Mammary epithelial cell (primary cell): ENCODE measurements at regions of chr3 and their contacts with region 1.

Region 1: DNA sequence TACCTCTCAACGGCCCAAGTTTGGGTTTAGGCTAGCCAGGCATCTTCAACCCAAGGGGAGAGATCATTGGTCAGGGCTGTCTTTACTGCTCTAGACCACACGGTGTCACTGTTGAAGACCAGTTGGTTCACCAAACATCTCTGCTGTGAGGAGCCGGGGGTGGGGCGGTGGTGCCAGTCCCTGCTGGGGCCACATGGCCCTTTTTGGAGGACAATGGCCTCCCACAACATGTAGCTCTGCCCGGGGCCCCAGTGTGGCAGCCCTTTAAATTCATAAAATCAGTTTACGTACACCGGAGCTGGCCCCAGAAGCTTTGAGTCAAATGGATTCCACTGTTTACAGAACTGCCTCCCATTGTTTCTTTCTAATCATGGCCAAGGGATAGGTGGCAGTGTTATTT is 19.1 kb upstream of the TM4SF18 start:
- DNase-seq: peak; percentile 55
- H3K4me3 ChIP-seq: no peak overlapping the region
- H3K27ac ChIP-seq: no peak overlapping the region
- H3K4me1 ChIP-seq: no peaks in the 10 kb centered on the region
- H3K27me3 ChIP-seq: no peaks in the 10 kb centered on the region
- CTCF ChIP-seq: peak; percentile 88 to 89

Region 2: DNA sequence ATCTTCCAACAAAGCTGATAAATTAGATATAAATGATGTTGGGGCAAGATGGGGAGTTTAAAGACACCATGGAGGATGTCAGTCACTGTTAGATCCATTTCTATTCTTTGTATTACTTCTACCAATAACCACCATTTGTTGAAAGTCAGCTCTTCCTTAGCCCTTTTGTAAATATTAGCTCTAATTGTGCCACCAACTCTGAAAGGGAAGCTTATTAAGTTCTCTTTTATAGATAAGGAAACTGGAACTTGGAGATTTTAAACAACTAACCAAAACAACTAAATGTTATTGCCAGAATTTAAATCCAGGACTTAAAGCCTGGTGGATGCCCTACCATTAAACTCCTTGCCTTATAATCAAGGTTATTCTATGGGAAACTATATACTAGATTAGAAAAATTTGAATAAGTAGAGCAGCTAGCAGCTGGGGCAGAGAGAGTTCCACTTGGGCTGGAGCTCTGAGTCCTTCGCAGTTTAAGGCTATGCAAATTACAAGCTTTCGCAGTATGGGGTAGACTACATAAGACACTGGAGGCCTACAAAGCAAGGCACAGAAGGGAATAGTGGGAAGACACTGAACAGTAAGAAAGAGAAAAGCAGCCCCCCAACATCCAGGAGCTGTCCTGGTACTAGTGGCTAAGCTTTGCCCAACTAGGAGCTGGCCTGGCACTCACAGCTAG is 71.7 kb before region 1 on chr3:
- CTCF ChIA-PET with region 1: no interaction called
- dilution Hi-C with region 1: loop called (anchors 10 kb)
- in situ Hi-C with region 1: no loop called
- intact Hi-C with region 1: no loop called
- DNase-seq: no peak
- H3K4me3 ChIP-seq: no peak overlapping the region
- H3K27ac ChIP-seq: no peak overlapping the region
- H3K4me1 ChIP-seq: peaks cover 9% of the 10 kb centered on the region
- H3K27me3 ChIP-seq: no peaks in the 10 kb centered on the region
- CTCF ChIP-seq: no peak

Region 3: GRCh38 chr3:149393345-149394160 is 41.0 kb after region 1 on chr3:
- CTCF ChIA-PET with region 1: interaction called, 4 read pairs
- dilution Hi-C with region 1: no loop called
- in situ Hi-C with region 1: no loop called
- intact Hi-C with region 1: loop called (anchors 1 kb)
- DNase-seq: peak; percentile 58
- H3K4me3 ChIP-seq: no peak overlapping the region
- H3K27ac ChIP-seq: no peak overlapping the region
- H3K4me1 ChIP-seq: peaks cover 10% of the 10 kb centered on the region
- H3K27me3 ChIP-seq: no peaks in the 10 kb centered on the region
- CTCF ChIP-seq: peak; percentile 93 to 98

Region 4: GRCh38 chr3:149460117-149460516 is 107.6 kb after region 1 on chr3:
- CTCF ChIA-PET with region 1: no interaction called
- dilution Hi-C with region 1: loop called (anchors 5 kb)
- in situ Hi-C with region 1: no loop called
- intact Hi-C with region 1: no loop called
- DNase-seq: no peak
- H3K4me3 ChIP-seq: no peak overlapping the region
- H3K27ac ChIP-seq: no peak overlapping the region
- H3K4me1 ChIP-seq: no peaks in the 10 kb centered on the region
- H3K27me3 ChIP-seq: no peaks in the 10 kb centered on the region
- CTCF ChIP-seq: no peak

Region 5: GRCh38 chr3:149480325-149481017 is 127.9 kb after region 1 on chr3:
- CTCF ChIA-PET with region 1: no interaction called
- dilution Hi-C with region 1: no loop called
- in situ Hi-C with region 1: loop called (anchors 5 kb)
- intact Hi-C with region 1: loop called (anchors 1 kb)
- DNase-seq: peak; percentile 73
- H3K4me3 ChIP-seq: no peak overlapping the region
- H3K27ac ChIP-seq: no peak overlapping the region
- H3K4me1 ChIP-seq: peaks cover 3% of the 10 kb centered on the region
- H3K27me3 ChIP-seq: no peaks in the 10 kb centered on the region
- CTCF ChIP-seq: peak; percentile 94 to 99

Region 6: DNA sequence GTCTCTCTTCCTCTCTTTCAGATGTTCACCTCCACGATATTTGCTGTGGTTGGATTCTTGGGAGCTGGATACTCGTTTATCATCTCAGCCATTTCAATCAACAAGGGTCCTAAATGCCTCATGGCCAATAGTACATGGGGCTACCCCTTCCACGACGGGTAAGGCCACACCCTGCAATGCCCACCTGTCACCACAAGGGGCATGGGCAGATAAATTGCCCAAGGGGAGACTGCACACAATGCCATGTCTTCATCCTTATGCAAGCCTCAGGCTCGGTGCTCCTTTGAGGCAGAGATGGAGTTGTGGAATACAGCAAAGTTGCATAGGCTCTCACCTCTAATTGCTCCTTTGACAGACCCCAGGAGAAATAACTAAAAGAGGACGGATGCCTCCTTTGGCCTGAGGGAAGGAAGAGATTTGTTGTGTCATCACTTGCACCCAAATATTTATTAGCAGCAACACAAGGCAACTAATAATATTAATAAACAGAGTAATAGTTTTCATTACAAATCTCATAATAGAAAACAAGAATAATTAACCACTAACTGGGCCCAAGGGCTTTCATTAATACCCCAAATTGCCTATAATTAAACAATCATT is 135.1 kb after region 1 on chr3:
- CTCF ChIA-PET with region 1: interaction called, 4 read pairs
- dilution Hi-C with region 1: no loop called
- in situ Hi-C with region 1: loop called in 1 of 2 experiments (anchors 5 kb)
- intact Hi-C with region 1: loop called (anchors 2 kb)
- DNase-seq: no peak
- H3K4me3 ChIP-seq: no peak overlapping the region
- H3K27ac ChIP-seq: no peak overlapping the region
- H3K4me1 ChIP-seq: no peaks in the 10 kb centered on the region
- H3K27me3 ChIP-seq: no peaks in the 10 kb centered on the region
- CTCF ChIP-seq: peak; percentile 42 to 57